ENCODE measurements at regions of chr9 and their contacts with region 1.

Region 1: DNA sequence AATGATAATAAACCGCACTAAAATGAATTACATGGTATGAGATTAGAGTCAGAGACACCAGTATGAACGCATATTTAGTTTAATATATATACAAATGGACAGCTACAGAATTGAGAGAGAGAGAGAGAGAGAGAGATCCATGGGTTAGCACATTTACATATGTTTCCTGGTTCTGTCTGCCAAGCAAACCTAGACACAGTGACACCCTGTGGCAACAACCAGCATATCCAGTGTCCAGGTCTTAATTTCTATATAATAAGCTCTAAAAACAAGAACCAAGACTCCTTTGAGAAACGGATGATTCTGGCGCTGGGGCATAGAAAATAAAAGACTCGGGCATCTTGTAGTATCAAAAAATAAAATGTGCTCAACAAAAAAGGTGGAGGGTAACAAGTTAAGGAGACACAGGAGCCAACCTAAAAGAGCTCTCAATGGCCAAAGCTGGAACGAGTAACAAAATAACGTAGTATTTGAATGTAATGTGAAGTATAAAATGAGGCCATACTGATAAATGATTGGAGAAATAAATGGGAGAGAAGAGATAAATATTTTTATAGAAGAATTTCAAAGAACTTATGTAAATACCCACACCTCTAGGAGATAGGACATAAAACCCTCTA is 84.5 kb downstream of the RFX3 start:
- DNase-seq: peak; percentile 29
- H3K4me3 ChIP-seq: no peak overlapping the region
- CTCF ChIP-seq: peak; percentile 66

Region 2: DNA sequence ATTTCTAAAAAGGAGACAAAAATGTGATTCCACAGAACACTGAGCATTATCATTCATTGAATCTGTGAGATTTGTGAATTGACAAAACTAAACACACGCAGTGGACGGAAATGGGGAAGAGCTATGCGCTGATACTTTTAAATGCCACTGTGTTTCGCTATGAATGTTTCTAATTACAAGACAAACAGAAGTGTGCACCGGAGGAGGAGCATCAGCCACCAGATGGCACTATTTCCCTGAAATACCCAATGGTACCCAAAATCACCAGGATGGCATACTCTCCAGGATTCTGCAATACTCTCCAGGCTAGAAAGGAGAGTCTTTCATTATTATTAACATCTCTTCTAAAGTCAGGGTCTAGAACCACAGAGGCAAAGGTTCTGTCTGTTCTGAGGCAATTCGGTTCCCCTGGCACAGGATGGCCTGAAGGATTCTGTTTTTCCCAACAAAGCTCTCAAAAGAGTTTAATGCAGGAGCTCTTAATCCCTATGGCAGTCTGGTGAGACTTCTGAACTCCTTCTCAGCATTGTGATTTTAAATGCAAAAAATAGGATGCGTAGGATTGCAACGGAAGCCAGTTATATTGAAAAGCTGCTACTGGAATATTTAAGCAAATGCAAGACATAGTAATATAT is 583.6 kb before region 1 on chr9:
- CTCF ChIA-PET with region 1: interaction called, 79 read pairs
- POLR2A ChIA-PET with region 1: no interaction called
- DNase-seq: no peak
- H3K4me3 ChIP-seq: no peak overlapping the region
- CTCF ChIP-seq: peak; percentile 80

Region 3: GRCh38 chr9:2872257-2872935 is 568.9 kb before region 1 on chr9:
- CTCF ChIA-PET with region 1: interaction called, 45 read pairs
- POLR2A ChIA-PET with region 1: no interaction called
- DNase-seq: no peak
- H3K4me3 ChIP-seq: no peak overlapping the region
- CTCF ChIP-seq: peak; percentile 41

Region 4: GRCh38 chr9:3200331-3200774 is 241.0 kb before region 1 on chr9:
- CTCF ChIA-PET with region 1: no interaction called
- POLR2A ChIA-PET with region 1: no interaction called
- DNase-seq: peak; percentile 23
- H3K4me3 ChIP-seq: no peak overlapping the region
- CTCF ChIP-seq: no peak

Region 5: DNA sequence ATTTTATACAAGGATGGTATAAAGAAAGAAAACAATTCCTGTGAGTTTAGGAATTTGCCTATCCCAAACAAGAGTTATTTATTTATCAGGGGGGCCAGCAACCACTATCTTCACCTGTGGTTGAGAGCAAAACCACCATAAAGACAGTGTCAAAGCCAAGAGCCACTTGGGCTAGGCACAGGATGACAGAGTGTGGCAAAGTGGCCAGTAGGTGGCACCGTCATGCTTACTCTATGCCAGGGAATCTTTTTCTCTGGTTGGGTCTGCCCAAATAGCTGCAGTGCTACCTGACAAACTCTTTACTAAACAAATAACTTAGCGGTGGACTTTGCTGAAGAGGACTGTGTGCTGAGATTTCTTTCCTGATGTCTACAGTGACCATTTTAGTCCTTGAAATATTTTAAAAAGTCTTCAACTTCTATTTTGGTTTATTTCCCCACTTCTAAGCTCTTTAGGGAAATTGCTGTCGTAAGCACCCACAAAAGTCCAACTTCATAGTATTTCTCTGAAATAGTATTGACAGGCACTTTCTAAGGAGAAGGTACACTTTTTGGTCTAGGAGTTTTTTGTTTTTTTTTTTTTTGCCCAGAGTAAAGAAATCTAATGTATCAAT is 200.5 kb before region 1 on chr9:
- CTCF ChIA-PET with region 1: interaction called, 164 read pairs
- POLR2A ChIA-PET with region 1: no interaction called
- DNase-seq: no peak
- H3K4me3 ChIP-seq: no peak overlapping the region
- CTCF ChIP-seq: peak; percentile 88

Region 6: DNA sequence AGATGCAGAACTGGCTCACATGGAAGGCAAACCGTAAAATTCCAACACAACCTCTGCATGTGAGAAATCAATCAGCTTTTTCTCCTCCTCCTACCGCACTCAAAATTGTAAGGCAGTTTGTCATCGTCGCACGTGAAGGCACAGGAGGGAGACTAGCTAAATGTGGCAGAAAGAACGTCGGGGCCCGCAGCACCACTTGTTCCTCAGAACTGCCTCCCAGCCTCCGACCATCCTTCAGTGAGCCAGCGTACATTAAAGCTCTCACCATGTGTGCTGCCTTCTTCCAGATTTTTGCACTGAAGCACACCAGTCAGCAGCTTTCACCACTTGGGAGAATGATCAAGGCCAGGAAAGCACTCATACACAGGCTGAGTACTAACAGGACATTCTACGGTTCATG is 21.4 kb before region 1 on chr9:
- CTCF ChIA-PET with region 1: interaction called, 17 read pairs
- POLR2A ChIA-PET with region 1: no interaction called
- DNase-seq: no peak
- H3K4me3 ChIP-seq: no peak overlapping the region
- CTCF ChIP-seq: no peak

Region 7: DNA sequence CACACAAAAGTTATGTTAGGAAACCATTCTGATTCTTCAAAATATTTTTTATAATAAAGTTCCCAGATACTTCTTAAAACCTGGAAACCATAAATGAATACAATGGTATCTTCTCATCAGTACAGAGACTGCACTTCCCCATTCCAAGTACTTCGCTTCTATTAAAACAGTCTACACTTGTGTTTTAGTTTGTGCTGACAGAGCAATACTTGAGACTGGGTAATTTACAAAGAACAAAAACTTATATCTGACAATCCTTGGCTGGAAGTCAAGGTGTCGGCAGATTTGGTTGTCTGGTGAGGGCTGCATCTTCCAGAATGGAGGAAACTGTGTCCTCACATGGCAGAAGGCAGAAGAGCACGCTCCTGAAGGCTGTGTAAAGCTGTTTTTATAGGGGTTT is 14.4 kb after region 1 on chr9:
- CTCF ChIA-PET with region 1: interaction called, 27 read pairs
- POLR2A ChIA-PET with region 1: no interaction called
- DNase-seq: no peak
- H3K4me3 ChIP-seq: no peak overlapping the region
- CTCF ChIP-seq: no peak

Region 8: GRCh38 chr9:3461237-3461636 is 19.9 kb after region 1 on chr9:
- CTCF ChIA-PET with region 1: interaction called, 11 read pairs
- POLR2A ChIA-PET with region 1: no interaction called
- DNase-seq: no peak
- H3K4me3 ChIP-seq: no peak overlapping the region
- CTCF ChIP-seq: no peak

Measured in AG04449 (cell line).